Caco-2 (cell line): ENCODE measurements at regions of chr20 and their contacts with region 1.

Region 1: DNA sequence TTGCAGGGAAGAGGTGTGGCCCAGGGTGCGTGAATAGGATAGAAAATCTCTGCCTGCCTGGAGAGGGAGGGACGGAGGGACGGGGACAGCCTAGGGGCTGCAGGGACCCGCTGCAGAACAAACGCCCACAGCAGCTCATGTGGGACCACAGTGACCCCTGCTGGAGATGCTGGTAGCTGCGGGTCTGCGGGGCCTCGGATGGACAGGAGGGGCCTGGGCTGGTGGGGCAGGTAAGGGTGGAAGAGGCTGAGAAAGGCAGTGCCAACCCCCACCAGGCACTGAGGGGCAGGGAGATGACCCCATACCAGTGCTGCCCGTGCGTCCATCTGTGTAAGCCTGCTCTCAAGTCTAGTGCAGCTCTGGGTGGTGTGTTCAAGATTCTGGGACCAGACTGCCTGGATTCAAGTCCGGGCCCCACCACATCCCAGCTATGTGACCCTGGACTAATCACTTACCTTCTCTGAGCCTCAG is 39.4 kb downstream of the KIAA1755 start:
- DNase-seq: peak; percentile 92 to 98
- H3K4me3 ChIP-seq: no peak overlapping the region
- H3K4me3 Mint-ChIP-seq: no peak overlapping the region
- H3K27ac Mint-ChIP-seq: no peak overlapping the region
- H3K4me1 ChIP-seq: peaks cover 13% of the 10 kb centered on the region
- H3K4me1 Mint-ChIP-seq: no peaks in the 10 kb centered on the region
- H3K27me3 ChIP-seq: no peaks in the 10 kb centered on the region
- H3K27me3 Mint-ChIP-seq: peaks cover 2% of the 10 kb centered on the region
- CTCF ChIP-seq: peak; percentile 100

Region 2: DNA sequence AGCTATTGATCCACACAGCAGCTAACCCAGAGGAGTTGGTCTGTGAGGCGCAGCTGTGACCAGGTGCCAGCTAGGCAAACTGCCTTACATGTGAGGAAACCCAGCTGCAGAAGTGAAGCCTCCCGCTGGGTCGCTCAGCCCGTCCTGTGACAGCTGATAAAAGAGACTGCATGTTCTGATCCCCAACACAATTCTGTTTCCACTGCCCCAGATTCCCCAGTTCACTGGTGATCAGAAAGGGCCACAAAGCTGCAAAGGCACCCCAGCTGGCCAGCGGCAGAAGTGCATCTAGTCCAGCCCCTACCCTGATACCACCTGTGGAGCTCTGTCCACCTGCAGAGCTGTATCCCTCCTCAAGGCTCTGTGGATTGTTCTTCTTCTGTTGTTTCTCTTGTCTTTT is 462.8 kb before region 1 on chr20:
- CTCF ChIA-PET with region 1: no interaction called
- POLR2A ChIA-PET with region 1: no interaction called
- intact Hi-C with region 1: loop called (anchors 10 kb)
- DNase-seq: peak; percentile 66 to 72
- H3K4me3 ChIP-seq: no peak overlapping the region
- H3K4me3 Mint-ChIP-seq: no peak overlapping the region
- H3K27ac Mint-ChIP-seq: no peak overlapping the region
- H3K4me1 ChIP-seq: no peaks in the 10 kb centered on the region
- H3K4me1 Mint-ChIP-seq: peaks cover 6% of the 10 kb centered on the region
- H3K27me3 ChIP-seq: no peaks in the 10 kb centered on the region
- H3K27me3 Mint-ChIP-seq: no peaks in the 10 kb centered on the region
- CTCF ChIP-seq: peak; percentile 75 to 78

Region 3: DNA sequence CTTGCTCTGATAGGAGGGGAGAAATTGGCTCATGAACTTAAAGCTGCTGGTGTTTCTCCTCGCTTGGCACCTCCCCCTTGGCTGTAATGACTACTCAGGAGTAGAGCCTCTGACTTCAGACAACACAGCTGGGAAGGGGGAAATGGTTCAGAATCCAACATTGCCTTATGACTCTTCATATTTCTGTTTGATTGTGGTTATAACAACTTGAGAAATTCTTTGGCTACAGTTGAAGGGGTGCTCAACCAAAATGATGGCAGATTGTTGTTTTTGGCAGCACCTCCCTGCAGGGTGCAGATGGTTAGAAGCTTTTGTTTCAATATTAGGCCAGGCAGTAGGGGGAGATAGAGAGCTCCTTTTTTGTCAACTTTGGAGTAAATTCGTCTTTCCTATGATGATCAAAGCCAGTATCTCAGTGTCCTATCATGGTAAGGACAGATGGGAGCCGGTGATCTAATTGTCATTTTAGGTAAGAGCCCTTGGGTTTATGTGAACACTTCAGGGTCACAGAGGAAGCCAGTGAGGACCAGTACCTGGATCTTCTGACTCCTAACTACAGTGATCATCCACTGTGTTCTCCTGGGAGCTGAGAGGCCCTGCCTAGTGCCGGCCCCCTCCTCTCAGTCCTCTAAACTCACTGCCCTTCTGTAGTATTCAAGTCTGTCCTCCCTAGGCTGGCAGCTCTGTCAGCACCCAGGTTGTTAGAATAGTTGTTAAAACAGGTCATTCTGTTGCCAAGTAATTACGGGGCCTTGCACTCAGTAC is 147.7 kb before region 1 on chr20:
- CTCF ChIA-PET with region 1: interaction called, 147 read pairs
- POLR2A ChIA-PET with region 1: no interaction called
- intact Hi-C with region 1: loop called (anchors 1 kb)
- DNase-seq: peak in 1 of 2 experiments; percentile 85
- H3K4me3 ChIP-seq: no peak overlapping the region
- H3K4me3 Mint-ChIP-seq: no peak overlapping the region
- H3K27ac Mint-ChIP-seq: no peak overlapping the region
- H3K4me1 ChIP-seq: peaks cover 4% of the 10 kb centered on the region; the same call in 1 of the 2 replicates
- H3K4me1 Mint-ChIP-seq: peaks cover 13% of the 10 kb centered on the region
- H3K27me3 ChIP-seq: no peaks in the 10 kb centered on the region
- H3K27me3 Mint-ChIP-seq: no peaks in the 10 kb centered on the region
- CTCF ChIP-seq: peak; percentile 95 to 98

Region 4: GRCh38 chr20:38165089-38165989 is 55.8 kb before region 1 on chr20 and contains the start of gene TGM2:
- CTCF ChIA-PET with region 1: interaction called, 32 read pairs
- POLR2A ChIA-PET with region 1: no interaction called
- intact Hi-C with region 1: loop called (anchors 1 kb)
- DNase-seq: peak; percentile 94 to 98
- H3K4me3 ChIP-seq: peak within 1 kb of the TSS; percentile 44
- H3K4me3 Mint-ChIP-seq: peak within 1 kb of the TSS; percentile 67
- H3K27ac Mint-ChIP-seq: peak within 1 kb of the TSS; percentile 6
- H3K4me1 ChIP-seq: peaks cover 38% of the 10 kb centered on the region
- H3K4me1 Mint-ChIP-seq: peaks cover 21% of the 10 kb centered on the region
- H3K27me3 ChIP-seq: no peaks in the 10 kb centered on the region
- H3K27me3 Mint-ChIP-seq: no peaks in the 10 kb centered on the region
- CTCF ChIP-seq: peak; percentile 97 to 98
- total RNA-seq, gene TGM2: 138 and 162 TPM in 2 replicates

Region 5: GRCh38 chr20:38196592-38196991 is 24.6 kb before region 1 on chr20:
- CTCF ChIA-PET with region 1: interaction called, 11 read pairs
- POLR2A ChIA-PET with region 1: no interaction called
- intact Hi-C with region 1: no loop called
- DNase-seq: peak in 1 of 2 experiments; percentile 50
- H3K4me3 ChIP-seq: no peak overlapping the region
- H3K4me3 Mint-ChIP-seq: no peak overlapping the region
- H3K27ac Mint-ChIP-seq: no peak overlapping the region
- H3K4me1 ChIP-seq: peaks cover 10% of the 10 kb centered on the region; the same call in 1 of the 2 replicates
- H3K4me1 Mint-ChIP-seq: peaks cover 2% of the 10 kb centered on the region
- H3K27me3 ChIP-seq: no peaks in the 10 kb centered on the region
- H3K27me3 Mint-ChIP-seq: no peaks in the 10 kb centered on the region
- CTCF ChIP-seq: no peak

Region 6: DNA sequence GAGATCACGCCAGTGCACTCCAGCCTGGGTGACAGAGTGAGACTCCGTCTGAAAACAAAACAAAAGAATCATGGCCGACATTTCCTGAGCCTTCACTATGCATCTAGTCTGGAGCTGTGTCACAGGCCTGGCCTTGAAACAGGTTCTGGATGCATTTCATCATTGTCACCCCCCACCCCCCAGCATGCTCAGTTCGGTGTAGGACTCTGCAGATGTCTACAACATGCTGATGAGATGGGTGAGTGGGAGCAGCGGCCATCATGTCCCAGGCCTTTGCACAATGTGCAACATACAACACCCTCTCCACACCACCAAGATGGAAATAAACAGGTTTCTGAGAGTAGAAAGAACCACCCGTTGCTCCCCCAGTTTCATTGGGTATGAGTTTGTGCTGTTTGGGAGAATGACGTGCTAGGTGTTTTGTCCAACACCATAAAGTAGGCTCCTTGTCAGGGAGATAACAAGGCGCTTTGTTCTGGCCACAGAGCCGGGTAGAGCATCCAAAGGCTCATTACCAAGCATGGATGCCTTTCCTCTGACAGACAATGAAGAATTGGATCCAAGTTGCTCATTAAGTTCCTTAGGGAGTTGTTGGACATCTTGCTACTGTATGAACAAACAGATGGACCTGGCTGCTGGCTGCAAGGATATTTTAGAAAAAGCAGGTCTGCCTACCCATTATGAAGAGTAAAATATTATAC is 191.9 kb after region 1 on chr20:
- CTCF ChIA-PET with region 1: interaction called, 10 read pairs
- POLR2A ChIA-PET with region 1: interaction called, 10 read pairs
- intact Hi-C with region 1: no loop called
- DNase-seq: peak in 1 of 2 experiments; percentile 34
- H3K4me3 ChIP-seq: no peak overlapping the region
- H3K4me3 Mint-ChIP-seq: no peak overlapping the region
- H3K27ac Mint-ChIP-seq: no peak overlapping the region
- H3K4me1 ChIP-seq: peaks cover 7% of the 10 kb centered on the region; the same call in 1 of the 2 replicates
- H3K4me1 Mint-ChIP-seq: peaks cover 9% of the 10 kb centered on the region
- H3K27me3 ChIP-seq: no peaks in the 10 kb centered on the region
- H3K27me3 Mint-ChIP-seq: no peaks in the 10 kb centered on the region
- CTCF ChIP-seq: no peak